CD14-positive monocyte (primary cell): ENCODE measurements at regions of chr21 and their contacts with region 1.

Region 1: DNA sequence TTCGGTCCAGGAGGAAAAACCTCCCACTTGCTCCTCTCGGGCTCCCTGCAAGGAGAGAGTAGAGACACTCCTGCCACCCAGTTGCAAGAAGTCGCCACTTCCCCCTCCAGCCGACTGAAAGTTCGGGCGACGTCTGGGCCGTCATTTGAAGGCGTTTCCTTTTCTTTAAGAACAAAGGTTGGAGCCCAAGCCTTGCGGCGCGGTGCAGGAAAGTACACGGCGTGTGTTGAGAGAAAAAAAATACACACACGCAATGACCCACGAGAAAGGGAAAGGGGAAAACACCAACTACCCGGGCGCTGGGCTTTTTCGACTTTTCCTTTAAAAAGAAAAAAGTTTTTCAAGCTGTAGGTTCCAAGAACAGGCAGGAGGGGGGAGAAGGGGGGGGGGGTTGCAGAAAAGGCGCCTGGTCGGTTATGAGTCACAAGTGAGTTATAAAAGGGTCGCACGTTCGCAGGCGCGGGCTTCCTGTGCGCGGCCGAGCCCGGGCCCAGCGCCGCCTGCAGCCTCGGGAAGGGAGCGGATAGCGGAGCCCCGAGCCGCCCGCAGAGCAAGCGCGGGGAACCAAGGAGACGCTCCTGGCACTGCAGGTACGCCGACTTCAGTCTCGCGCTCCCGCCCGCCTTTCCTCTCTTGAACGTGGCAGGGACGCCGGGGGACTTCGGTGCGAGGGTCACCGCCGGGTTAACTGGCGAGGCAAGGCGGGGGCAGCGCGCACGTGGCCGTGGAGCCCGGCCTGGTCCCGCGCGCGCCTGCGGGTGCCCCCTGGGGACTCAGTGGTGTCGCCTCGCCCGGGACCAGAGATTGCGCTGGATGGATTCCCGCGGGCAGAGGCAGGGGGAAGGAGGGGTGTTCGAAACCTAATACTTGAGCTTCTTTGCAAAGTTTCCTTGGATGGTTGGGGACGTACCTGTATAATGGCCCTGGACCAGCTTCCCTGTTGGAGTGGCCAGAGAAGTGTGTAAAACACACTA is 45.3 kb downstream of the MRPL39 start:
- DNase-seq: peak; percentile 55 to 85 (median 58)
- H3K4me3 ChIP-seq: peak overlapping the region; percentile 43 to 74 (median 71)
- H3K4me3 Mint-ChIP-seq: peak overlapping the region; percentile 97 to 98
- H3K27ac ChIP-seq: peak overlapping the region in 1 of 2 donors; percentile 17
- H3K27ac Mint-ChIP-seq: peak overlapping the region; percentile 77 to 92 (median 85)
- H3K4me1 ChIP-seq: peaks cover 33 to 45% of the 10 kb centered on the region in 2 donors
- H3K4me1 Mint-ChIP-seq: peaks cover 45% of the 10 kb centered on the region
- H3K27me3 ChIP-seq: no peaks in the 10 kb centered on the region
- H3K27me3 Mint-ChIP-seq: peaks cover 3 to 6% (median 5%) of the 10 kb centered on the region in 3 donors
- CTCF ChIP-seq: peak; percentile 50

Region 2: GRCh38 chr21:25421327-25422028 is 140.5 kb before region 1 on chr21:
- intact Hi-C with region 1: loop called in 1 of 2 experiments (anchors 5 kb)
- DNase-seq: peak; percentile 28 to 60 (median 35)
- H3K4me3 ChIP-seq: no peak overlapping the region
- H3K4me3 Mint-ChIP-seq: no peak overlapping the region
- H3K27ac ChIP-seq: no peak overlapping the region
- H3K27ac Mint-ChIP-seq: peak overlapping the region in 2 of 7 donors; percentile 18 to 60
- H3K4me1 ChIP-seq: peaks cover 0 to 7% of the 10 kb centered on the region in 2 donors
- H3K4me1 Mint-ChIP-seq: peaks cover 9% of the 10 kb centered on the region
- H3K27me3 ChIP-seq: no peaks in the 10 kb centered on the region
- H3K27me3 Mint-ChIP-seq: no peaks in the 10 kb centered on the region
- CTCF ChIP-seq: peak; percentile 51

Region 3: GRCh38 chr21:25441835-25442234 is 120.1 kb before region 1 on chr21:
- intact Hi-C with region 1: loop called in 1 of 2 experiments (anchors 10 kb)
- DNase-seq: no peak
- H3K4me3 ChIP-seq: no peak overlapping the region
- H3K4me3 Mint-ChIP-seq: no peak overlapping the region
- H3K27ac ChIP-seq: no peak overlapping the region
- H3K27ac Mint-ChIP-seq: no peak overlapping the region
- H3K4me1 ChIP-seq: no peaks in the 10 kb centered on the region
- H3K4me1 Mint-ChIP-seq: no peaks in the 10 kb centered on the region
- H3K27me3 ChIP-seq: no peaks in the 10 kb centered on the region
- H3K27me3 Mint-ChIP-seq: no peaks in the 10 kb centered on the region
- CTCF ChIP-seq: no peak

Region 4: DNA sequence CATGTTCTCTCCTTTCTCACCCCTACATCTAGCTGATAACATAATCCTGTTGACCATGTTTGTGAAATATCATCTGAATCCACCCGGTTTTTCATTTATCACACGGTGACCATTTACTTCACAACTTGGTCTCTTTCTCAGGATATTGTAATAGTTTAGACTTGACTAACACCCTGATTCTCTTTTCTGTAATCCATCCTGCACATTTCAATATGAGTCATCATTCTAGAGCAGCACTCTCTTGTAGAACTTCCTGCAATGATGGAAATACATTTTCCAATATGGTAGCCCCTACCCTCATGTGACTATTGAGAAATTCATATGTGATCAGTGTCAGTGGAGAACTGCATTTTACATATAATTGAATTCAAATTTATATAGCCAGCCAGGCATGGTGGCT is 74.8 kb after region 1 on chr21:
- intact Hi-C with region 1: no loop called
- DNase-seq: peak in 1 of 3 donors; percentile 41
- H3K4me3 ChIP-seq: no peak overlapping the region
- H3K4me3 Mint-ChIP-seq: no peak overlapping the region
- H3K27ac ChIP-seq: no peak overlapping the region
- H3K27ac Mint-ChIP-seq: no peak overlapping the region
- H3K4me1 ChIP-seq: peaks cover 20 to 21% of the 10 kb centered on the region in 2 donors
- H3K4me1 Mint-ChIP-seq: peaks cover 22% of the 10 kb centered on the region
- H3K27me3 ChIP-seq: peaks cover 18 to 30% of the 10 kb centered on the region in 2 donors
- H3K27me3 Mint-ChIP-seq: peaks cover 36 to 43% (median 38%) of the 10 kb centered on the region in 3 donors
- CTCF ChIP-seq: no peak

Region 5: GRCh38 chr21:25647647-25648046 is 85.7 kb after region 1 on chr21:
- intact Hi-C with region 1: loop called in 1 of 2 experiments (anchors 5 kb)
- DNase-seq: peak; percentile 14 to 54 (median 16)
- H3K4me3 ChIP-seq: peak overlapping the region in 1 of 3 experiments; percentile 24
- H3K4me3 Mint-ChIP-seq: peak overlapping the region; percentile 34 to 60
- H3K27ac ChIP-seq: peak overlapping the region in 1 of 2 donors; percentile 43
- H3K27ac Mint-ChIP-seq: peak overlapping the region in 5 of 7 donors; percentile 27 to 81 (median 70)
- H3K4me1 ChIP-seq: peaks cover 20 to 22% of the 10 kb centered on the region in 2 donors
- H3K4me1 Mint-ChIP-seq: peaks cover 29% of the 10 kb centered on the region
- H3K27me3 ChIP-seq: no peaks in the 10 kb centered on the region
- H3K27me3 Mint-ChIP-seq: peaks cover 0 to 2% (median 0%) of the 10 kb centered on the region in 3 donors
- CTCF ChIP-seq: no peak

Region 6: GRCh38 chr21:25759573-25759972 is 197.6 kb after region 1 on chr21:
- intact Hi-C with region 1: no loop called
- DNase-seq: no peak
- H3K4me3 ChIP-seq: no peak overlapping the region
- H3K4me3 Mint-ChIP-seq: no peak overlapping the region
- H3K27ac ChIP-seq: no peak overlapping the region
- H3K27ac Mint-ChIP-seq: peak overlapping the region in 1 of 7 donors; percentile 84
- H3K4me1 ChIP-seq: no peaks in the 10 kb centered on the region
- H3K4me1 Mint-ChIP-seq: peaks cover 8% of the 10 kb centered on the region
- H3K27me3 ChIP-seq: no peaks in the 10 kb centered on the region
- H3K27me3 Mint-ChIP-seq: no peaks in the 10 kb centered on the region
- CTCF ChIP-seq: no peak